Activated CD4-positive, alpha-beta T cell treated with anti-CD3 and anti-CD28 coated beads for 36 hours (primary cell): ENCODE measurements at regions of chr19 and their contacts with region 1.

Region 1: GRCh38 chr19:36665832-36666231 is 805 bp downstream of the ZNF461 start:
- DNase-seq: no peak
- ATAC-seq: no peak
- H3K4me3 Mint-ChIP-seq: peak overlapping the region; percentile 98
- H3K27ac Mint-ChIP-seq: peak overlapping the region; percentile 99
- H3K4me1 Mint-ChIP-seq: peaks cover 26% of the 10 kb centered on the region
- H3K27me3 Mint-ChIP-seq: no peaks in the 10 kb centered on the region

Region 2: DNA sequence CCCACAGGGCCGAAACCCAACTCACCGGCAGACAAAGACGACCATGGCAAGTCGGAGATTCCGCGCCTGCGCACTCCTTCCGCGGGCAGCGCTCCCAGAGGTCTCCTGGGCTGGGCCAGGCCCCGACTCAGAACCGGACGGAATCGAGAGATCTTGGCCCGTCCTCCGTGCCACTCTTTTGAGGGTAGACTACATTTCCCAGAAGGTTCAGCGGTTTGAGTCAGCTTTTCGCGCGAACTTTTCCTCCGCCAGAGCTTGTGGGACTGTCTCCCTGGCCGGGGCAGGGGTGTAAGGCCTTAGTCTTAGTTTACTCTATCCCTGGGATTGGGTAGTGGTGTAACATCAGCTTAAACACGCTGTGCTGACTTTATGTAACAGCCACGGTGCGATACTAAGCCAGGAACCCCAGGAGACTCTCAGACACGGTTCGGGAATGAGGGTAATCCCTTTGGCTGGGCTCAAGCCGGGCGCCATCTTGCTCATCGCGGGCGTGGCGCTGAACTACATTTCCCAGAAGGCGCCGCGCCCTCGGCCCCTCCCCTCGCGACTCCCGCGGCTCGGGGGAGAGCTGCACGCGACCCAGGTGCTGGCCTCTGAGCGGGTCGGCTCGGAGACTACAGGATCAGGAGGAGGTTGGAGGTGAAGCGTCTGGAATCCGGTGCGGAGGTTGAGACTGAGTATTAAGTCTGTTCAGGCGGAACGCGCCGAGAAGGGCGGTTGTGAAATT is 137.5 kb before region 1 on chr19 and contains the start of gene ZNF260:
- CTCF ChIA-PET with region 1: no interaction called
- POLR2A ChIA-PET with region 1: no interaction called
- intact Hi-C with region 1: loop called (anchors 1 kb)
- DNase-seq: peak; percentile 97
- ATAC-seq: peak; percentile 91
- H3K4me3 Mint-ChIP-seq: peak within 1 kb of the TSS; percentile 87
- H3K27ac Mint-ChIP-seq: peak within 1 kb of the TSS; percentile 96
- H3K4me1 Mint-ChIP-seq: peaks cover 14% of the 10 kb centered on the region
- H3K27me3 Mint-ChIP-seq: no peaks in the 10 kb centered on the region
- total RNA-seq, gene ZNF260: 5.7 to 8.2 TPM

Region 3: GRCh38 chr19:36796076-36796992 is 130.5 kb after region 1 on chr19:
- CTCF ChIA-PET with region 1: no interaction called
- POLR2A ChIA-PET with region 1: no interaction called
- intact Hi-C with region 1: loop called in 1 of 2 experiments (anchors 1 kb)
- DNase-seq: no peak
- ATAC-seq: no peak
- H3K4me3 Mint-ChIP-seq: peak overlapping the region; percentile 83
- H3K27ac Mint-ChIP-seq: peak overlapping the region; percentile 92
- H3K4me1 Mint-ChIP-seq: peaks cover 14% of the 10 kb centered on the region
- H3K27me3 Mint-ChIP-seq: peaks cover 4% of the 10 kb centered on the region

Region 4: DNA sequence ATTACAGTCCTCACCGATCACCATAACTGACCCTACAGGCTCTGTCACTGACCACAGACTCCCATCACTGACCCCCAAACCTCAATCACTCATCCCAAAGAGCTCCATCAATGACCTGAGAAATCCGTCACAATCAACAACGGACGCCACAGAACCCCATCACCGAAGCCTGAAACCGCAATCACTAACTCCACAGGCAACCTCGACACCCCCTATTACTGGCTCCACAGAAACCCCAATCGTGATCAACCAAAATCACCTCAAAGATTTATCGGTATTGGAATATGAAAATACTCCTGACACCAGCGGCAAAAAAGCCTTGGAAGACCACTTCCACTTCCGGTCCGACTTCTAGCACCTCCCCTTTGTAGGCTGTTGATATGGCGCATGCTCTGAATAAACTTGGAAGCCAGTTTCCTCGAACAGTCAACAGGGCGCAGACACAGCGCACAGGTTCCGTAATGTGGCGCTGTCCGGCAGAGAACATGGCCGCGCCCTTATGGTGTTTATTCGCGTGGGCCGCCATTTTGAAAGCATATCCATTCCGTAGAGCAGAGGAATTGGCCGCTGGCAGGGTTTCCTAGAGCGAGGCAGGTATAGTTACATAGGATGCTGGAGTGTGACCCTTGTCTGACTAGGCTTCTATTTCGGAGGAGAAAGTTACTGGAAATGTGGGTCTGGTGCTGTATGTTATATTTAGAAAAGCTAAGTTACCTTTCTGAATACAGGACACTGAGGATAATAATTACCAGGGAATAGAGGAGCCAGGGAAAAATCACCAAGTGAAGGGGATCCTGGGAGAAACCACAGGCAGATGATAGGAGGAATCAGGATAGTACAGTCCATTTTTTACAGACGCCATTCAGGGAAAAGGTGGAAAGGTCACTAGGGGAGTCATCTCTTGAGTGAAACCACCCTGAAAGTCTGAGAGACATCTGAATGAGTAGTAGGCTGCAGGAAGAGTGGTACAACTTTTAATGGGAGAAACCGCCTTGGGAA is 506.8 kb after region 1 on chr19 and contains the start of gene ZNF585A:
- CTCF ChIA-PET with region 1: no interaction called
- POLR2A ChIA-PET with region 1: no interaction called
- intact Hi-C with region 1: loop called in 1 of 2 experiments (anchors 2 kb)
- DNase-seq: peak; percentile 92
- ATAC-seq: peak; percentile 100
- H3K4me3 Mint-ChIP-seq: no peak within 1 kb of the TSS
- H3K27ac Mint-ChIP-seq: no peak within 1 kb of the TSS
- H3K4me1 Mint-ChIP-seq: no peaks in the 10 kb centered on the region
- H3K27me3 Mint-ChIP-seq: no peaks in the 10 kb centered on the region
- total RNA-seq, gene ZNF585A: 8.7 to 9.8 TPM

Region 5: DNA sequence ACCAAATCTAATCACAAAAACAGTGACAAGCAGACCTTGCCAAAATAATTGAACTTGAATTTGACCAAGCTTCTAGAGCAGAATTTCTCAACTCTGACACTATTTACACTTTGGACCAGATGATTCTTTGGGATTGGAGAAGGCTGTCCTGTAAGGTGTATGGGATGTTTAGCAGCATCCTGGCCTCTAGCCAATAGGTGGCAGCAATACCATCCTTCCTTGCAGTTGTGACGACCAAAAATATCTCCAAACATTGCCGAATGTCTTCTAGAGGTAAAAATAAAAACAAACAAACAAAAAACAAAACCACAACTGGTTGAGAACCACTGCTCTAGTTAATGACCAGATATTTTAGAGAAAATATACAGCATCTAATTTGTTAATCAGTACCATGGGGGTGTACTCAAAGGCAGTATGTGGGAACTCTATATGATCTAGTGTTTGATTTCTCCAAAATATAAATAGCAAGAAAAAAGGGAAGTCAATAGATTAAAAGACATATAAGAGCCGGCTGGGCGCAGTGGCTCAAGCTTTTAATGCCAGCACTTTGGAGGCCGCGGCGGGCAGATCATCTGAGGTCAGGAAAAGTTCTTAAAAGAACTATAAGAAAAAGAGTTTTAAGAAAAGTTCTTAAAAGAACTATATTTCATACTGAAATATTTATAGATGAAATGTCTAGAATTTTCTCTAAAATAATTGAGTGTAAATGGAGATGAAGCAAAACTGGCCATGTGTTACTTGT is 644.2 kb after region 1 on chr19:
- CTCF ChIA-PET with region 1: no interaction called
- POLR2A ChIA-PET with region 1: no interaction called
- intact Hi-C with region 1: loop called in 1 of 2 experiments (anchors 10 kb)
- DNase-seq: peak; percentile 56
- ATAC-seq: no peak
- H3K4me3 Mint-ChIP-seq: no peak overlapping the region
- H3K27ac Mint-ChIP-seq: no peak overlapping the region
- H3K4me1 Mint-ChIP-seq: peaks cover 17% of the 10 kb centered on the region
- H3K27me3 Mint-ChIP-seq: no peaks in the 10 kb centered on the region